K562 (cell line): ENCODE measurements at regions of chr9 and their contacts with region 1.

Region 1: GRCh38 chr9:113737517-113738271 is 138.4 kb upstream of the ZNF618 start:
- DNase-seq: peak; percentile 54 to 70 (median 64)
- ATAC-seq: peak; percentile 92
- H3K4me3 ChIP-seq: no peak overlapping the region
- H3K27ac ChIP-seq: no peak overlapping the region
- H3K4me1 ChIP-seq: no peaks in the 10 kb centered on the region
- H3K27me3 ChIP-seq: peaks cover 3 to 4% of the 10 kb centered on the region in 2 experiments; a peak in 3 of 5 replicates
- CTCF ChIP-seq: peak; percentile 81 to 85 (median 81)
- EP300 ChIP-seq: no peak
- POLR2A ChIP-seq: no peak
- RAD21 ChIP-seq: peak; percentile 58 to 77

Region 2: DNA sequence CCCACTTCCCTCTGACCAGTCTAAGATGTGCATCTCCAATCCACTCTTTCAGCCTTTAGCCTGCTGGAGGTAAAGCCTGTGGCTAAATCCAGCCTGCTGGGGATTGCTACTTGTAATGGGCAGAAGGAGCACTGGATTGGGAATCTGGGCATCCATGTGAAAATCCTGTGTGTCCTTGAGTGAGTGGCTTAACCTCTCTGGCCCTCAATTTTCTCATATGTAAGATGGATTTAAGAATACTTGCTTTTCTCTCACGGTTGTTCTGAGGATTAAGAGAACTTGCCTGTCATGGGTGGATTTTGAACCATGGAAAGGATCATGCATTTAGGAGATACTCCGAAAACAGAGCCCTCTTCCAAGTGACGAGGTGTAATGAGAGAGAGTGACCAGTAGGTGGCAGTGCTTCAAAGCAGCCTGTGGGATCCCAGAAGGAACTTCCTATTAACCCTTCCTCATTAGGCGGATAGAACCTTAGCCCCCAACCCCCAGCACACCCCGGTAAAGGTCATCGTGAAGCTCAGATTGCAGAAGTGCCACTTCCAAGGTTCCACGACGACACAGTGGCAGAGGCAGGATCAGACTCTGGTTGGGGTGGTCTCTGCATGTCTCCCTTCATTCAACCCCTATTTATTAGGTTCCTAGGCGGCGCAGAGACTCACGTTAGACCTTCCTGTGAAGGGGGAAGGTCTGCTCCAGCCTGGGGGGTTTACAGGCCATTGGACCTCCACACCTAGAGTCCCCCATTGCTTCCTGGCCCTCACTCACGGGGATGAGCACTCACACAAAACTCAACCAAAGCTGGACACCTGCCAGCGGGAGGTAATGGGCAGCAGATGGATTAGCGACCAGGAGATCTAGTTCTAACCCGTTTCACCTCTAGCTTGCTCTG is 69.7 kb after region 1 on chr9:
- CTCF ChIA-PET with region 1: no interaction called
- POLR2A ChIA-PET with region 1: no interaction called
- in situ Hi-C with region 1: no loop called
- intact Hi-C with region 1: loop called (anchors 5 kb)
- DNase-seq: peak; percentile 59 to 81 (median 80)
- ATAC-seq: peak; percentile 83
- H3K4me3 ChIP-seq: no peak overlapping the region
- H3K27ac ChIP-seq: no peak overlapping the region
- H3K4me1 ChIP-seq: peaks cover 0 to 3% of the 10 kb centered on the region in 2 experiments; a peak in 1 of 5 replicates
- H3K27me3 ChIP-seq: peaks cover 0 to 5% of the 10 kb centered on the region in 2 experiments; a peak in 2 of 5 replicates
- CTCF ChIP-seq: peak; percentile 74 to 91 (median 88)
- EP300 ChIP-seq: no peak
- POLR2A ChIP-seq: no peak
- RAD21 ChIP-seq: peak; percentile 43 to 77; a peak in 3 of 4 replicates

Region 3: GRCh38 chr9:113876151-113876992 is 138.7 kb after region 1 on chr9 and contains the start of gene ZNF618:
- CTCF ChIA-PET with region 1: interaction called, 4 read pairs
- POLR2A ChIA-PET with region 1: no interaction called
- in situ Hi-C with region 1: no loop called
- intact Hi-C with region 1: loop called (anchors 10 kb)
- DNase-seq: peak; percentile 32 to 72 (median 66)
- ATAC-seq: peak; percentile 70
- H3K4me3 ChIP-seq: peak within 1 kb of the TSS; percentile 87
- H3K27ac ChIP-seq: peak within 1 kb of the TSS; percentile 66
- H3K4me1 ChIP-seq: peaks cover 0 to 14% of the 10 kb centered on the region in 2 experiments; a peak in 2 of 5 replicates
- H3K27me3 ChIP-seq: no peaks in the 10 kb centered on the region; a peak in 3 of 5 replicates
- CTCF ChIP-seq: peak; percentile 3 to 48 (median 32); a peak in 3 of 6 replicates
- EP300 ChIP-seq: no peak
- POLR2A ChIP-seq: no peak
- RAD21 ChIP-seq: no peak
- polyA plus RNA-seq, gene ZNF618: 0.22 to 0.32 TPM

Region 4: GRCh38 chr9:113963017-113963620 is 225.4 kb after region 1 on chr9:
- CTCF ChIA-PET with region 1: interaction called, 6 read pairs
- POLR2A ChIA-PET with region 1: no interaction called
- in situ Hi-C with region 1: no loop called
- intact Hi-C with region 1: loop called (anchors 2 kb)
- DNase-seq: peak; percentile 61 to 78 (median 74)
- ATAC-seq: peak; percentile 96
- H3K4me3 ChIP-seq: no peak overlapping the region
- H3K27ac ChIP-seq: no peak overlapping the region
- H3K4me1 ChIP-seq: no peaks in the 10 kb centered on the region
- H3K27me3 ChIP-seq: no peaks in the 10 kb centered on the region
- CTCF ChIP-seq: peak; percentile 72 to 85 (median 85)
- EP300 ChIP-seq: no peak
- POLR2A ChIP-seq: no peak
- RAD21 ChIP-seq: peak; percentile 46 to 59; a peak in 3 of 4 replicates

Region 5: DNA sequence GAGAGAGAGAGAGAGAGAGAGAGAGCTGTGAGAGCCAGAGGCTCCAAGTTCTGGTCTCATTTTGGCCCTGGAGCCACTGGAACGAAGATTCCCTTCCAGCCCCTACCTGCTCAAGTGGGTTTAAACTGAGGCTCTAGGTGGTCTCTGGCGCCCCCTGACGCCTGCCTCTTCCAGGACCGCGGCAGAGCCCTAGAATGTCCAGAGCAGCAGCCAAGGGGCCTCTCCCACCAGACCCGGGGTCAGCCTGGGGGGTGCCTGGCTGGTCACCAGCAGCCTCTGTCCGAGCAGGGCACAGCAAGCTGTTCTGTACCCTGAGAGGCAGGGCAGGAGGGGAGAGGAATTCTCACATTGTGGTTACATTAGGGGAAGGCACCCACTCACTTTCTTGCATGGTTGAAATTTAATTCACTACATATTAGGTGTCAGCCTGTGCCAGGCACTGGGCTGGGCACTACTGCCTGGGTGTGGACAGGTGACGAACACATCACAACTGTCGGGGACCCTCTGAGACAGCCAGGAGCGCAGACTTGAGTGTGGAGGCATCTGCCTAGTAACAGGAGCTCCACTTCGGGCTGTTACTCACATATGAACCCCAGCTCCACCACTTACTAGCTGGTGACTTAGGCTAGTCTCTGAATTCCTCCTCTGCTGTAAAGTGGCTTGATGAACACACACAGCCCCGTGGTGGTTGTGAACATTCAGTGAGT is 295.9 kb after region 1 on chr9:
- CTCF ChIA-PET with region 1: no interaction called
- POLR2A ChIA-PET with region 1: no interaction called
- in situ Hi-C with region 1: no loop called
- intact Hi-C with region 1: loop called (anchors 5 kb)
- DNase-seq: peak; percentile 27 to 54 (median 48)
- ATAC-seq: peak; percentile 84
- H3K4me3 ChIP-seq: no peak overlapping the region
- H3K27ac ChIP-seq: no peak overlapping the region
- H3K4me1 ChIP-seq: peaks cover 0 to 2% of the 10 kb centered on the region in 2 experiments; a peak in 2 of 5 replicates
- H3K27me3 ChIP-seq: no peaks in the 10 kb centered on the region
- CTCF ChIP-seq: peak; percentile 51 to 59 (median 59); a peak in 5 of 6 replicates
- EP300 ChIP-seq: no peak
- POLR2A ChIP-seq: no peak
- RAD21 ChIP-seq: peak in 1 of 2 experiments; percentile 55; a peak in 2 of 4 replicates

Region 6: GRCh38 chr9:114082017-114082762 is 344.5 kb after region 1 on chr9:
- CTCF ChIA-PET with region 1: no interaction called
- POLR2A ChIA-PET with region 1: no interaction called
- in situ Hi-C with region 1: no loop called
- intact Hi-C with region 1: loop called (anchors 5 kb)
- DNase-seq: peak; percentile 79 to 85 (median 82)
- ATAC-seq: peak; percentile 95
- H3K4me3 ChIP-seq: no peak overlapping the region
- H3K27ac ChIP-seq: no peak overlapping the region
- H3K4me1 ChIP-seq: peaks cover 5 to 6% of the 10 kb centered on the region in 2 experiments; a peak in 4 of 5 replicates
- H3K27me3 ChIP-seq: peaks cover 7 to 54% of the 10 kb centered on the region in 2 experiments; a peak in 4 of 5 replicates
- CTCF ChIP-seq: peak; percentile 82 to 93 (median 89)
- EP300 ChIP-seq: no peak
- POLR2A ChIP-seq: no peak
- RAD21 ChIP-seq: peak; percentile 56 to 86

Region 7: GRCh38 chr9:114291064-114291474 is 553.4 kb after region 1 on chr9:
- CTCF ChIA-PET with region 1: no interaction called
- POLR2A ChIA-PET with region 1: no interaction called
- in situ Hi-C with region 1: no loop called
- intact Hi-C with region 1: loop called (anchors 5 kb)
- DNase-seq: peak; percentile 63 to 81 (median 78)
- ATAC-seq: peak; percentile 87
- H3K4me3 ChIP-seq: no peak overlapping the region
- H3K27ac ChIP-seq: no peak overlapping the region
- H3K4me1 ChIP-seq: no peaks in the 10 kb centered on the region; a peak in 1 of 5 replicates
- H3K27me3 ChIP-seq: peaks cover 0 to 26% of the 10 kb centered on the region in 2 experiments; a peak in 2 of 5 replicates
- CTCF ChIP-seq: peak; percentile 86 to 89 (median 89)
- EP300 ChIP-seq: no peak
- POLR2A ChIP-seq: no peak
- RAD21 ChIP-seq: peak; percentile 85 to 87

Region 8: DNA sequence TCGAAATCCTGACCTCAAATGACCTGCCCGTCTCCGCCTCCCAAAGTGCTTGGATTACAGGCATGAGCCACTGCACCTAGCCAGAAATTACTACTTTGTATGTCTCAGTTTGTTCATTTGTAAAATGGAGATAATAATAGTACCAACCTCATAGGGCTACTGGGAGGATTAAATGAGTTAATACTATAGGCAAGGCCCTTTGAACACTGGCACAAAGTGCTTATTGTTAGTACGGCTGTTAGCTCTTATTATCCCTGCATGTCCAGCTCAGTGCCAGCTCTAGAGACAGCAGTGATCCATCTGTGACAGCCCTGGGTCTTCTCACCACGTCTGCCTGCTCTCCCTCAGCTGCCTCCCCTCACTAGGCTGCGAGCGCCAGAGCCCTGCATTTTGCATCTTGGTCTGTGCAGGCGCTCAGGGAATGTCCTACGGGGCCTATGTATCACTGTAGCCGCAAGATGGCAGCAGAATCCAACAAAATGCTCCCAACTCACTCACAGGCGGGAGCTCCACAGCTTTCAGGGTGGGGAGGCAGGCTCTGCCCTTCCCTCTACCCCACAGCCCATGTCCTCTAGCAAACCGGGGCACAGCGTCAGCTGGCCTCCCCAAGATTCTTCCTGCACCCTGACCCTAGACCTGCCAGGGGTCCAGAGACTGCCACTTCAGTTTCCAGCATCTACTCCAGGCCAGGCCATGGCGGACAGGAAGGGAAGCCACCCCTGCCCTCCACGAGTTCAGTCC is 667.8 kb after region 1 on chr9:
- CTCF ChIA-PET with region 1: no interaction called
- POLR2A ChIA-PET with region 1: no interaction called
- in situ Hi-C with region 1: no loop called
- intact Hi-C with region 1: no loop called
- DNase-seq: peak; percentile 75 to 83 (median 80)
- ATAC-seq: peak; percentile 97
- H3K4me3 ChIP-seq: no peak overlapping the region
- H3K27ac ChIP-seq: no peak overlapping the region
- H3K4me1 ChIP-seq: no peaks in the 10 kb centered on the region; a peak in 2 of 5 replicates
- H3K27me3 ChIP-seq: peaks cover 0 to 5% of the 10 kb centered on the region in 2 experiments; a peak in 1 of 5 replicates
- CTCF ChIP-seq: peak; percentile 85 to 91 (median 88)
- EP300 ChIP-seq: no peak
- POLR2A ChIP-seq: no peak
- RAD21 ChIP-seq: peak; percentile 76 to 88